Posterior cingulate gyrus (tissue), 11 donors: ENCODE measurements at regions of chrX and their contacts with region 1.

Region 1: DNA sequence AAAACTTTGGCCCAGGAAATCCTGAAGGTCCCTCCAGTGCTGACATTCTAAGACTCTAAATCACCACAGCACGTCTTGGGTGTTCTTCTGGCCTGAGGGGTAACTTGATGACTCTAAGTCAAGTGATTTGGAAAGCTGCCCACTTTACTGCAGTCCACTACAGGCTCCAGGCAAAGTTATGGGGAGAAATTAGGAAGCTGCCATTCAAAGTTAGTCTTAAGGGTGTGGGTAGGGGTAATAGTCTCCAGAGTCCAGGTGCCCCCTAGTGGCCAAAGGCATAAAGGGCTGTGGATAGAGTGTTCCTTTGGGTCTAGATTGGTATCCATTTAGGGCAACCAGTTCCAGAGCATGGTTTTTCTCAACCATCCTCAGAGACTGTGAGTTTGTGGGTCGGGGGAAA is 38.7 kb upstream of the SLC16A2 start:
- DNase-seq: peak in 7 of 10 donors; percentile 44 to 86 (median 61)

Region 2: GRCh38 chrX:74550295-74550802 is 167.7 kb after region 1 on chrX:
- intact Hi-C with region 1: loop called (anchors 1 kb)
- DNase-seq: peak; percentile 54 to 97 (median 81)